CD4-positive, alpha-beta memory T cell (primary cell): ENCODE measurements at regions of chr10 and their contacts with region 1.

Region 1: GRCh38 chr10:72215652-72216549 is at the starts of genes ANAPC16 and ASCC1:
- DNase-seq: peak; percentile 92 to 98 (median 96)
- H3K4me3 ChIP-seq: peak within 1 kb of the TSS; percentile 70 to 88
- H3K4me3 Mint-ChIP-seq: peak within 1 kb of the TSS; percentile 95 to 100 (median 98)
- H3K27ac ChIP-seq: peak within 1 kb of the TSS; percentile 88
- H3K27ac Mint-ChIP-seq: peak within 1 kb of the TSS; percentile 97 to 100 (median 99)
- H3K4me1 ChIP-seq: peaks cover 47% of the 10 kb centered on the region
- H3K4me1 Mint-ChIP-seq: peaks cover 31 to 58% (median 44%) of the 10 kb centered on the region in 4 donors
- H3K27me3 ChIP-seq: no peaks in the 10 kb centered on the region
- H3K27me3 Mint-ChIP-seq: no peaks in the 10 kb centered on the region
- total RNA-seq, gene ANAPC16: 114 to 118 TPM
- total RNA-seq, gene ASCC1: 14.3 to 17.5 TPM

Region 2: GRCh38 chr10:72061491-72061890 is 154.4 kb before region 1 on chr10:
- CTCF ChIA-PET with region 1: interaction called, 3 read pairs
- POLR2A ChIA-PET with region 1: interaction called, 7 read pairs
- intact Hi-C with region 1: loop called (anchors 5 kb)
- DNase-seq: no peak
- H3K4me3 ChIP-seq: no peak overlapping the region
- H3K4me3 Mint-ChIP-seq: peak overlapping the region in 3 of 8 donors; percentile 34 to 71 (median 36)
- H3K27ac ChIP-seq: no peak overlapping the region
- H3K27ac Mint-ChIP-seq: peak overlapping the region in 6 of 7 donors; percentile 68 to 92 (median 83)
- H3K4me1 ChIP-seq: peaks cover 5% of the 10 kb centered on the region
- H3K4me1 Mint-ChIP-seq: peaks cover 17 to 49% (median 23%) of the 10 kb centered on the region in 4 donors
- H3K27me3 ChIP-seq: no peaks in the 10 kb centered on the region
- H3K27me3 Mint-ChIP-seq: no peaks in the 10 kb centered on the region

Region 3: GRCh38 chr10:72162978-72163377 is 52.9 kb before region 1 on chr10:
- CTCF ChIA-PET with region 1: no interaction called
- POLR2A ChIA-PET with region 1: no interaction called
- intact Hi-C with region 1: loop called (anchors 10 kb)
- DNase-seq: no peak
- H3K4me3 ChIP-seq: no peak overlapping the region
- H3K4me3 Mint-ChIP-seq: no peak overlapping the region
- H3K27ac ChIP-seq: no peak overlapping the region
- H3K27ac Mint-ChIP-seq: no peak overlapping the region
- H3K4me1 ChIP-seq: peaks cover 9% of the 10 kb centered on the region
- H3K4me1 Mint-ChIP-seq: peaks cover 3 to 13% (median 4%) of the 10 kb centered on the region in 4 donors
- H3K27me3 ChIP-seq: no peaks in the 10 kb centered on the region
- H3K27me3 Mint-ChIP-seq: no peaks in the 10 kb centered on the region

Region 4: GRCh38 chr10:72260588-72261322 is 44.9 kb after region 1 on chr10:
- CTCF ChIA-PET with region 1: interaction called, 8 read pairs
- POLR2A ChIA-PET with region 1: interaction called, 22 read pairs
- intact Hi-C with region 1: loop called (anchors 5 kb)
- DNase-seq: peak; percentile 77 to 92 (median 80)
- H3K4me3 ChIP-seq: peak overlapping the region; percentile 52 to 90
- H3K4me3 Mint-ChIP-seq: peak overlapping the region; percentile 84 to 93 (median 89)
- H3K27ac ChIP-seq: peak overlapping the region; percentile 74
- H3K27ac Mint-ChIP-seq: peak overlapping the region; percentile 95 to 98 (median 96)
- H3K4me1 ChIP-seq: peaks cover 89% of the 10 kb centered on the region
- H3K4me1 Mint-ChIP-seq: peaks cover 49 to 77% (median 63%) of the 10 kb centered on the region in 4 donors
- H3K27me3 ChIP-seq: no peaks in the 10 kb centered on the region
- H3K27me3 Mint-ChIP-seq: no peaks in the 10 kb centered on the region

Region 5: DNA sequence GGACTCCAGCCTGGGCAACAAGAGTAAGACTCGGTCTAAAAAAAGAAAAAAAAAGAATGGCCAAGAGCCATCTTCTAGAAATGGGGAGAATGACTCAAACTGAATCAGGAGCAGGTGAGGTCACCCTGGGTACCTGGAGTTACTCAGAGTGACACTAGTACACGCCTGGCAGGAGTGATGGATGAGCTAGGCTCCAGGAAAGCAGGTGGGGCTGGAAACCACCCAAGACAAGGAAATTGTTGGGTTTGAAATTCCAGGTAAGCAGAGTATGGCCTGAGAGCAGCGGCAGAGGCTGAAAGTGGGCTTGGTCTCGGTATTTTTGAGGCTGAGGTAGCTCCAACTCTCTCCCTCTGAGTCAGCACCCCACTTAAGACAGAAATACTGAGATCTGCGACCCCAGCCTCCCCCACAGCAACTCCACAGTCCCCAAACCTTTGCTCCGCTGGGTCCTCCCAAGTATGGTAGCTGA is 76.4 kb after region 1 on chr10:
- CTCF ChIA-PET with region 1: interaction called, 3 read pairs
- POLR2A ChIA-PET with region 1: interaction called, 21 read pairs
- intact Hi-C with region 1: loop called (anchors 1 kb)
- DNase-seq: peak in 2 of 5 donors; percentile 9 to 57
- H3K4me3 ChIP-seq: no peak overlapping the region
- H3K4me3 Mint-ChIP-seq: peak overlapping the region in 6 of 8 donors; percentile 7 to 70 (median 34)
- H3K27ac ChIP-seq: no peak overlapping the region
- H3K27ac Mint-ChIP-seq: peak overlapping the region; percentile 75 to 99 (median 88)
- H3K4me1 ChIP-seq: peaks cover 66% of the 10 kb centered on the region
- H3K4me1 Mint-ChIP-seq: peaks cover 41 to 67% (median 57%) of the 10 kb centered on the region in 4 donors
- H3K27me3 ChIP-seq: no peaks in the 10 kb centered on the region
- H3K27me3 Mint-ChIP-seq: no peaks in the 10 kb centered on the region

Region 6: DNA sequence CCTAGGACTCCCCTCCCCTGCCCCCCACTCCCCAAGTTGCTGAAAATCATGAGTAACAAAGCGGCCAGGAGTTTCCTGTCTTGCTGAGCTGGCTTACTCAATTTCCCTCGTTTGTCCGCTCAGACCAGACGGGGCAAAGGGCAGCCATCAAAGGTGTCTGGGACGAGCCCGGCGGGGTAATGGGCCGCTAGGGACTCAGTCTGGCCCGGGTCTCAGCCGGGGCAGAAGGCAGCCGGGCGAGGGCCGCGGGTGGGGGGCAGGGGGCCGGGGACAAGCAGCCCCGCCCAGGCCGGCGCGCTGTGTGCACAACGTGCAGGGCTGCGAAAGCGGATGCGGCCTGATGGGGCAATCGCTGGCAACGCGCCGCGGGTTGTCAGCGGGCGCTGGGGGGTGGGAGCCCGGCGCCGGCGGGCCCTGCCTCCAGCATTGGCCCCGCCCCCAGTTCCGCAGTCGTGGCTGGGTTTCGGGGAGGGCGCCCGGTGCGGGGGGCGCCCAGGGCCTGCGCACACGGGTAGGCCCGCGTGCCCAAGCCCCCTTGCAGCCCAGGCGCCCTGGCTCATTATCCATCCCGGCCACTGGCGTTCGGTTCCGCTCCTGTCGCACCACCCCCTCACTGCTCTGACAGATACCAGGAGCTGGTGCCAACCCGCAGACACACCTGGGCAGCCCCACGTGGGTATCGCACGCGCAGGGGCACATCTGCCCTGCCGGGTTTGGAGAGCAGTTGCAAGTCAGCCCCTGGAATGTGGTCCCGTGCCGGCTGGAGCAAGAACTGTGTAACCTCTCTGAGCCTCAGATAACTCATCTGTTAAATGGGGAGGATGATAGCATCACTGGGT is 103.7 kb after region 1 on chr10:
- CTCF ChIA-PET with region 1: interaction called, 4 read pairs
- POLR2A ChIA-PET with region 1: interaction called, 34 read pairs
- intact Hi-C with region 1: no loop called
- DNase-seq: peak; percentile 87 to 91 (median 89)
- H3K4me3 ChIP-seq: peak overlapping the region; percentile 46 to 55
- H3K4me3 Mint-ChIP-seq: peak overlapping the region; percentile 79 to 89 (median 84)
- H3K27ac ChIP-seq: peak overlapping the region; percentile 89
- H3K27ac Mint-ChIP-seq: peak overlapping the region; percentile 96 to 99 (median 99)
- H3K4me1 ChIP-seq: peaks cover 95% of the 10 kb centered on the region
- H3K4me1 Mint-ChIP-seq: peaks cover 53 to 92% (median 74%) of the 10 kb centered on the region in 4 donors
- H3K27me3 ChIP-seq: no peaks in the 10 kb centered on the region
- H3K27me3 Mint-ChIP-seq: no peaks in the 10 kb centered on the region